Mammary epithelial cell (primary cell): ENCODE measurements at regions of chr17 and their contacts with region 1.

Region 1: DNA sequence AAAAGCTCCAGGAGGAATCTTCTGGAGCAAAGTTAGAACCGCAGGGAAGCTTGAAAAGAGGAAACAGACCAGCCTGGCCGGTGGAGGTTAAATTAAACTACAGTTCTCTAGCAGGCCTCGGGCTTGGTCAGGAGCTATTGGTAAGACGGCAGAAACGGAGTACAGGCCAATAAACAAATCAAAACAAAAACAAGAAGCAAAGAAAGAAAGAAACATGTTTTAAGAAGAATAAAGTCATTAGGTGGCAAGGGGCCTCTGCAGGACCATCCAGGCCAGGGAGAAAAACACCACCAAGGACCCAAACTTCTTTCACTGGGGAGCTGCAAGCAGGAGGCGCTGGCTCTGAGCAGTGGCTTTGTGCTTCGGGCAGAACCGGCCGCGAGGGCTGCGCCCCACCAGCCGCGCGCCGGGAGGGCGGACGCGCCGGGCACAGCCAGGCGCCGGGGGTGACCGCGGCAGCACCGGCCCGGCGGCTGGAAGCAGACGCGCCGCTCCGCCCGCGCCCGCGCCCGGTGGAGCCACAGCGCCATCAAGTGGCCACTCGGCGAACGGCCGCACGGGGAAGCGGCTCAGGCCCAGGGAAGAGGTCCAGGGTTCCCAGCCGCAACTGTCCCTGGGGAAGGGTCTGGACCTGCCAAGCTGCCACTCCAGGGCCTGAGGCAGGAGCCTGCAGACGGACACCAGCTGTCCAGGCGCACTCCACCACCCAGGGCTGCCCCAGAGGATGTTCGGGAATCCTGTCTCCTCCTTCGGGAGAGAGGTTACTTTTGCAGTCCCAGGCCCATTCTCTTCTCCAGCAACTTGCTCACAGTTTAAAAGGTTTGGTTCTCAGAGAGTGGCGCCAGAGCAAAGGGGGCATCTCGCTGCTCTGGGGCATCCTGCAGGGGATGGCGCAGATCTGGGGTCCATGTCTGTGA is 419.4 kb downstream of the SOX9 start:
- DNase-seq: peak; percentile 67
- H3K4me3 ChIP-seq: peak overlapping the region in 2 of 3 experiments; percentile 10 to 20
- H3K27ac ChIP-seq: peak overlapping the region; percentile 43
- H3K4me1 ChIP-seq: peaks cover 16% of the 10 kb centered on the region
- H3K27me3 ChIP-seq: no peaks in the 10 kb centered on the region
- CTCF ChIP-seq: peak; percentile 60 to 83

Region 2: GRCh38 chr17:70808596-70808995 is 1731.6 kb before region 1 on chr17:
- CTCF ChIA-PET with region 1: no interaction called
- dilution Hi-C with region 1: no loop called
- in situ Hi-C with region 1: loop called in 1 of 2 experiments (anchors 25 kb)
- intact Hi-C with region 1: no loop called
- DNase-seq: peak; percentile 8
- H3K4me3 ChIP-seq: no peak overlapping the region
- H3K27ac ChIP-seq: no peak overlapping the region
- H3K4me1 ChIP-seq: no peaks in the 10 kb centered on the region
- H3K27me3 ChIP-seq: no peaks in the 10 kb centered on the region
- CTCF ChIP-seq: peak; percentile 59 to 63

Region 3: GRCh38 chr17:71237903-71238538 is 1302.2 kb before region 1 on chr17:
- CTCF ChIA-PET with region 1: no interaction called
- dilution Hi-C with region 1: no loop called
- in situ Hi-C with region 1: loop called in 1 of 2 experiments (anchors 25 kb)
- intact Hi-C with region 1: loop called (anchors 2 kb)
- DNase-seq: peak; percentile 83
- H3K4me3 ChIP-seq: no peak overlapping the region
- H3K27ac ChIP-seq: no peak overlapping the region
- H3K4me1 ChIP-seq: peaks cover 9% of the 10 kb centered on the region
- H3K27me3 ChIP-seq: no peaks in the 10 kb centered on the region
- CTCF ChIP-seq: peak; percentile 49 to 57

Region 4: DNA sequence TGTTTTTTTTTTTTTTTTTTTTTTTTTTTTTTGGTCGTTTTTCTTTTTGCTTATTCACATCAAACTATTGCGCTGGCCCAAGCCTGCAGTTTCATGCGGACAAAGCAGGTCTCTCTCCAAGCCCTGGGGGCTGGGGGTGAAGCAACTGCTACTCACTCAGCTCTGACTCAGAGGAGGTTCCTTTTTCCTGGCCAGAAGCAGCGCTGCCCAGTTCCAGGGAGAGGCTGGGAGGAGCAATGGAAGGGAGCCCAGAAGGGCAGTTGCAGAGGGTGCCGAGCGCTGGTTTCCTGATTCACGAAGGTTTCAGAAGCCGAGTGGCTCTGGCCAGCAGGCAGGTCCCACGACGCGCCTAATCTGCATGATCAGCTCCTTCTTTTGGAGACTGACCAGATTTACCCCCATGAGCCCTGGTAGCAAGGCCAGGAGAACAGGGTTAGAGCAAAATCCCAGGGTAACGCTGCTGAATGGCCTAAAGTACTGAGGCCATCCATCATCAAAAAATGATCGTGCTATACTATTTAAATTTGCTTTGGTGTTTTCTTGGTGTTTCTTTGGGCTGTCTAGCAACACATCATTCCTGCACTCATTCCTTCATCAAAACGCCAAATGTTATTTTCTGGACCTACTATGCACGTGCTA is 564.1 kb before region 1 on chr17:
- CTCF ChIA-PET with region 1: no interaction called
- dilution Hi-C with region 1: loop called (anchors 25 kb)
- in situ Hi-C with region 1: no loop called
- intact Hi-C with region 1: loop called (anchors 10 kb)
- DNase-seq: peak; percentile 98
- H3K4me3 ChIP-seq: peak overlapping the region in 1 of 3 experiments; percentile 27
- H3K27ac ChIP-seq: peak overlapping the region; percentile 87
- H3K4me1 ChIP-seq: peaks cover 34% of the 10 kb centered on the region
- H3K27me3 ChIP-seq: no peaks in the 10 kb centered on the region
- CTCF ChIP-seq: no peak

Region 5: DNA sequence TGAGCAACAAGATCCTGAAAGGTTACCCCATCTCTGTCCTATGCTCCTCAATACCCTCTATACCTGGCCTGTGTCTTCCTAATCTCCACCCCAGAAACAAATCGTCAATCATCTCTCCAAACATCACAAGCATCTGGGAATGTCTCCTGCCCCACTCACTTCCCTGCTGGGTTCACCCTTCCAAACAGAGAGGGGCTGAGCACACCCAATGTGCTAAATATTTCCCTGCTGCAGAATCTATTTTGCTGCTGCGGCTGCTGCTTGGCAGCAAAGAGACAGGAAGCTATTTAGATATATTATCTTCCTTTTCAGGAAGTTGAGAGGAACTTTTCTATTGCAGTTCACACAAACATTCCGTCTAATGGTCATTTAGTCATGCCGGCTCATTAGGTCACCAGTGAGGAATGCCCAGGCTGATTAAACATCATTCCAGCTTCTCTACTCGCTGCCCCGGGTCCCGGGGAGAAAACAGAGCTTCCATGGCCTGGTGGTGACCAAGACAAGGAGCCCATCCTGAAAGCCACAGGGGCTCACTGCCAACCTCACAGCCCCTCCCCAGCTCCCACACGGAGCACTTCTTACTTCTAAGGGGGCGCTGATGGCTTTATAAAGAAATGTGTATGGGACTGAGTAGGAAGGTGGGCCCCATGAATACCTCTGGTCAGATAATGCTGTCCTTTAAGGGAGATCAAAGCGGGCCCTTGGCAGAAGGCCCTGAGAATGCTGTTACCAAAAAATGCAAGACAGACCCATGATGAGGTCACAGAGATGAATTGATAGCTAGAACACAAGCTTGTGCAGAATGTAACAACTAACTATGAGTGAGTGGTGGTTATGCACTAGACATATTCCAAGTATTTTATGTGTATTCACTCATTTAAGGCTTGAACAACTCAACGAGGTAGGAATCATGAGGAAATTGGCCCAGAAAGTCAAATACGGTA is 201.1 kb before region 1 on chr17:
- CTCF ChIA-PET with region 1: no interaction called
- dilution Hi-C with region 1: no loop called
- in situ Hi-C with region 1: loop called in 1 of 2 experiments (anchors 10 kb)
- intact Hi-C with region 1: loop called (anchors 1 kb)
- DNase-seq: peak; percentile 78
- H3K4me3 ChIP-seq: no peak overlapping the region
- H3K27ac ChIP-seq: peak overlapping the region; percentile 58
- H3K4me1 ChIP-seq: peaks cover 25% of the 10 kb centered on the region
- H3K27me3 ChIP-seq: no peaks in the 10 kb centered on the region
- CTCF ChIP-seq: no peak

Region 6: GRCh38 chr17:72498364-72499210 is 41.7 kb before region 1 on chr17:
- CTCF ChIA-PET with region 1: no interaction called
- dilution Hi-C with region 1: loop called (anchors 5 kb)
- in situ Hi-C with region 1: no loop called
- intact Hi-C with region 1: no loop called
- DNase-seq: no peak
- H3K4me3 ChIP-seq: no peak overlapping the region
- H3K27ac ChIP-seq: no peak overlapping the region
- H3K4me1 ChIP-seq: peaks cover 4% of the 10 kb centered on the region
- H3K27me3 ChIP-seq: no peaks in the 10 kb centered on the region
- CTCF ChIP-seq: no peak

Region 7: GRCh38 chr17:74288785-74289184 is 1748.5 kb after region 1 on chr17:
- CTCF ChIA-PET with region 1: no interaction called
- dilution Hi-C with region 1: no loop called
- in situ Hi-C with region 1: no loop called
- intact Hi-C with region 1: no loop called
- DNase-seq: peak; percentile 74
- H3K4me3 ChIP-seq: no peak overlapping the region
- H3K27ac ChIP-seq: no peak overlapping the region
- H3K4me1 ChIP-seq: peaks cover 2% of the 10 kb centered on the region
- H3K27me3 ChIP-seq: no peaks in the 10 kb centered on the region
- CTCF ChIP-seq: no peak